ENCODE measurements at regions of chr3 and their contacts with region 1.

Region 1: DNA sequence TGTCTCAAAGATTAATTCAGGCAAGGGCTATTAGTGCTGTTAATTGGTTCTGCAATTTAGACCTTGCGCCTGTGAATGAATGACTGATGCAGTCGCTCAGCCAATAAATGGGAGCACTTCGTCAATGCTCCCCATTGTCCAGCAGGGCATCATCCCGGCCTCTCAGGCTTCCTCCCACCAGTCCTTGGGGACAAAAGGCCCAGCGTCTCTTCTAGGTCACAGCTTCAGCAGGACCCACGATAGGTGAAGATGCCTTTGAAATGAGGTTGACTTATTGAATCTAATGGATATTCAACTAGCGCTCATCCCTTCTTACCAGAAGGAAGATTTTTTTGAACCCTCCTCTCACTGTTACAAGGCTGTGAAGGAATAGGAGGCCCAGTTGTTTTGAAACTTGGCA is 47.7 kb upstream of the CLDN18 start:
- DNase-seq: no peak
- H3K4me3 ChIP-seq: no peak overlapping the region
- H3K27ac ChIP-seq: no peak overlapping the region
- H3K4me1 ChIP-seq: no peaks in the 10 kb centered on the region
- H3K27me3 ChIP-seq: no peaks in the 10 kb centered on the region
- CTCF ChIP-seq: no peak
- EP300 ChIP-seq: no peak
- RAD21 ChIP-seq: no peak

Region 2: DNA sequence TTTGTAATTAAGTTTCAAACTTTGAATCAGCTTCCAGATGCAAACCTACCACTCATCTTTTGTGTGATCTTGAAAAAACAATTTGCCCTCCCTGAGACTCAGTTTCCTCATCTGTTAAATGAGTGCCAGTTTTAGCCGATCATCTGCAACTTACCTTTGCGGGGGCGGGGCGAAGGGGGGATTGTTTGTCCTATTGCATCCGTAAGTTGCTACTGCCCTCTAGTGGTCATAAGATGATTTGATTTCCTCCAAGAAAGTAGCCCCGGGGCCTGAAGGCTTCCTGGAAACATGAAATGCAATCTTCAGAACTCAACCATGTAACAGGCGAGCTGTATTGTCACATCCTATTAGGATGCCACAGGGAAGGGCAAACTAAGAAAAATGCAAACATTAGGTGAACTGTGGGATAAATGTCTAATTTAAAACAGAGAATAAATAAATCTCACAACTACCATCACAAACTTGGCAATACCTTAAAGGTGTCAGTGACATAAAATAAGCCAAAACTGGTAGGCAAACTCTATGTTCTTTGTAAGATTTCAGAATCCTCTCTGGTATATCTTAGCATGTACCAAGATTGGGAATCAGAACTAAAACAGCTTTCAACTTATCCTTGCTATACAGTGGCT is 15.8 kb before region 1 on chr3:
- CTCF ChIA-PET with region 1: interaction called, 13 read pairs
- POLR2A ChIA-PET with region 1: no interaction called
- DNase-seq: peak; percentile 59
- H3K4me3 ChIP-seq: peak overlapping the region in 1 of 2 experiments; percentile 24; a peak in 1 of 4 replicates
- H3K27ac ChIP-seq: no peak overlapping the region
- H3K4me1 ChIP-seq: no peaks in the 10 kb centered on the region
- H3K27me3 ChIP-seq: no peaks in the 10 kb centered on the region
- CTCF ChIP-seq: peak; percentile 86
- EP300 ChIP-seq: no peak
- RAD21 ChIP-seq: peak; percentile 80

Region 3: GRCh38 chr3:138174421-138175122 is 212.3 kb after region 1 on chr3 and contains the start of gene DBR1:
- CTCF ChIA-PET with region 1: no interaction called
- POLR2A ChIA-PET with region 1: no interaction called
- DNase-seq: peak; percentile 86
- H3K4me3 ChIP-seq: peak within 1 kb of the TSS; percentile 58 to 79
- H3K27ac ChIP-seq: peak within 1 kb of the TSS; percentile 68
- H3K4me1 ChIP-seq: peaks cover 0 to 8% of the 10 kb centered on the region in 2 experiments; a peak in 2 of 4 replicates
- H3K27me3 ChIP-seq: no peaks in the 10 kb centered on the region
- CTCF ChIP-seq: no peak
- EP300 ChIP-seq: no peak
- RAD21 ChIP-seq: no peak
- polyA plus RNA-seq, gene DBR1: 9.2 and 10.1 TPM in 2 replicates

Measured in SK-N-SH (cell line).